ENCODE measurements at regions of chr20 and their contacts with region 1.

Region 1: GRCh38 chr20:18992418-18992817 is 178.8 kb downstream of the SCP2D1 start:
- DNase-seq: no peak
- H3K4me3 ChIP-seq: no peak overlapping the region
- H3K27ac ChIP-seq: no peak overlapping the region
- H3K4me1 ChIP-seq: no peaks in the 10 kb centered on the region
- H3K27me3 ChIP-seq: no peaks in the 10 kb centered on the region
- CTCF ChIP-seq: no peak

Region 2: GRCh38 chr20:18466894-18467730 is 525.3 kb before region 1 on chr20 and contains the starts of genes DZANK1 and POLR3F:
- CTCF ChIA-PET with region 1: no interaction called
- POLR2A ChIA-PET with region 1: interaction called, 10 read pairs
- intact Hi-C with region 1: no loop called
- DNase-seq: peak; percentile 99
- H3K4me3 ChIP-seq: peak within 1 kb of the TSS; percentile 94
- H3K27ac ChIP-seq: peak within 1 kb of the TSS; percentile 96
- H3K4me1 ChIP-seq: peaks cover 7% of the 10 kb centered on the region
- H3K27me3 ChIP-seq: no peaks in the 10 kb centered on the region
- CTCF ChIP-seq: no peak
- total RNA-seq, gene DZANK1: 3.9 and 4.4 TPM in 2 replicates
- total RNA-seq, gene POLR3F: 18.1 and 22.1 TPM in 2 replicates